CD14-positive monocyte (primary cell): ENCODE measurements at regions of chr20 and their contacts with region 1.

Region 1: DNA sequence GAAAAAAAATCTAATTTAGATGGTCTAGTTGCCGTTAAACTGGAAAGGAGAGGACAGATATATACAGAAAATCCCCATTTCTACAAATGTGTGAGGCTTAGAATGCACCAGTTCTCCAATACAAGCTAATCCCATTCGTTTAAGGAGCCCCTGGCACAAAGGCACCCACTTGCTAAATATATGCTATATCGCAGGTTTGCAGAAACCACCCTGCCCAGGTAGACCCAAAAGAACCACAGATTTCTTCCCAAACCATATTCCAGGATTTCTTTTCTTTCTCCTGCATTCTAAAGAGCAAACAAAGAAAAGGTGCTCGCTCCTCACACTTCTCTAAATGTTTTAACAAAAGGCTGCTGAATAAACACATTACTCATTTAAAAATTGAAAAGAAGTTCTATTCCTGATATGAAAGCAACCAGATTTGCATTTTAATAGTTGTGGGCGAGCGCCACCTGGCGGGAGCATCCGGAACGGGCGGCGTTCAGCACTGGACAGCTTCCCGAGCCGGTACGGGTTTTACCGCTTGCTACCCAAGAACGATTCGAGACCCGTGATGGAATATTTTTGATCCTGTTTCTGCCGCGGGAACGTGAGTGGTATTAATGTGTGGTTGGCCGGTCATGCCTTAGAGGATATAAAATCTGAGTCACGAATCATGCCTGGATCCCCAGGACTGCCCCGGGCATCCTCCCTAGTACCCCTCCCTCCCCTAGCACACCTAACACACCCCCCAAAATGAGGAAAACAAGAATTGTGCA is 2.1 kb downstream of the PTPRT start:
- DNase-seq: peak; percentile 2 to 24 (median 19)
- H3K4me3 ChIP-seq: no peak overlapping the region
- H3K4me3 Mint-ChIP-seq: peak overlapping the region in 1 of 2 donors; percentile 72
- H3K27ac ChIP-seq: no peak overlapping the region
- H3K27ac Mint-ChIP-seq: no peak overlapping the region
- H3K4me1 ChIP-seq: no peaks in the 10 kb centered on the region
- H3K4me1 Mint-ChIP-seq: no peaks in the 10 kb centered on the region
- H3K27me3 ChIP-seq: peaks cover 12 to 37% of the 10 kb centered on the region in 2 donors
- H3K27me3 Mint-ChIP-seq: peaks cover 31 to 47% (median 35%) of the 10 kb centered on the region in 3 donors
- CTCF ChIP-seq: peak; percentile 95

Region 2: DNA sequence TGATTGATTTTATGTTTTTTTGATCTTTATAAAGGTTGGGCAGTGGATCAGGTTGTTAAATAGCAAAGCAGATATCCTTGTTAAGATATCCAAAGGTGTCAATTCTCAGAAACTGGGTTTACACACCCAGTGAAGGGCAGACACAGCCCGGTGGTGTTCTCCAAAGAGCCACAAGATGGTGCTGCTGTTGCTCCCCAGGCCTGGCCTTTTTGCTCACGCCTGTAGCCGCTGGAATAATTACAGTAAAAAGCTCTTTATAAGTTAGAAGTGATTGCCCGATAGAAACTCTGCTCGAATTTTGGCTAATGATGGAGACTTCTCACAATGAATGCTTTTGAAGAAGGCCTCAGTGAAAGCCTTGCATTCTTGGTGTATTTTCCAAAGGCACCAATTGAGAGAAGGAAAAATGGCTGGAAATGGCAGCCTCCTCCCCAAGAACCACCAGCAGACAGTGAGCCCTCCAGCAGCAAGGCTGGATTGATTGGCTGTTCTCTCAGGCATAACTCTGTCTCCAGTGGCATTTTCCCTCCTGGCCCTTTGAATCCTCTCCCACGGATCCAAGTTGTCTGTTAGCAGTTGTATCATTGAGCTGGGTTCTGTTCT is 1449.0 kb before region 1 on chr20:
- intact Hi-C with region 1: loop called (anchors 5 kb)
- DNase-seq: peak in 2 of 3 donors; percentile 1 to 21
- H3K4me3 ChIP-seq: no peak overlapping the region
- H3K4me3 Mint-ChIP-seq: no peak overlapping the region
- H3K27ac ChIP-seq: no peak overlapping the region
- H3K27ac Mint-ChIP-seq: no peak overlapping the region
- H3K4me1 ChIP-seq: no peaks in the 10 kb centered on the region
- H3K4me1 Mint-ChIP-seq: no peaks in the 10 kb centered on the region
- H3K27me3 ChIP-seq: no peaks in the 10 kb centered on the region
- H3K27me3 Mint-ChIP-seq: peaks cover 2 to 5% (median 2%) of the 10 kb centered on the region in 3 donors
- CTCF ChIP-seq: peak; percentile 66

Region 3: DNA sequence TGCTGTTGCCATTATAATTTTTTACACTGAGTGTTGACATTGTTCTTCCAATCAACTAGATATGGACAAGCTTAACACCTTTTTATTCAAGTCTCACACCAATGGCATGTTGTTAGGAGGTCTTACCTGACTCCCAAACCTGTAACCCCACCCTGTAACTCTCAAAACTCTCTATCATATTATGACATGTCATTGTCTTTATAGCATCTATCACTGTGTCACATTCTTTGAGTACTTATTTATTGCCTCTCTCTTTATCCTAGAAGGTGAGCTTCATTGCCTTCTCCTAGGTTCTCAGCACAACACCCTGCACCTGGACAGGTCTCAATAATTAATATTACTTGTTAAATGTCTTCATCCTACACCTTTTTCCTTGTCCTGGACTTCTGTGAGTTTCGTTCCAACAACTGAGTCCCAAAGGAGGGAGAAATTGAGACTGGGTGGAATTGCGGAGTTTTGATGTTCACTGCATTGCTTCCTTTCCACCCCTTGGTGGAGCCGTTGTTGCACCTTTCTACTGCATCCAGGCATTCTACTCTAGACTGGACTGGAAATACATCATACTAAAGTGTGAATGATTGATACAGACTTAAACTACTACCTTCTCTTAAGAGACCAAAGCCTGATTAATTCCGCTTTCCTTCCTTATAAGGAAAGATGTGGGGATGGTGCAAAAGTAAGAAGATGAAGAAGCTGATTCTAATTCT is 1231.5 kb before region 1 on chr20:
- intact Hi-C with region 1: loop called in 1 of 2 experiments (anchors 5 kb)
- DNase-seq: no peak
- H3K4me3 ChIP-seq: no peak overlapping the region
- H3K4me3 Mint-ChIP-seq: no peak overlapping the region
- H3K27ac ChIP-seq: no peak overlapping the region
- H3K27ac Mint-ChIP-seq: no peak overlapping the region
- H3K4me1 ChIP-seq: no peaks in the 10 kb centered on the region
- H3K4me1 Mint-ChIP-seq: no peaks in the 10 kb centered on the region
- H3K27me3 ChIP-seq: no peaks in the 10 kb centered on the region
- H3K27me3 Mint-ChIP-seq: peaks cover under 1 to 4% (median 3%) of the 10 kb centered on the region in 3 donors
- CTCF ChIP-seq: no peak

Region 4: DNA sequence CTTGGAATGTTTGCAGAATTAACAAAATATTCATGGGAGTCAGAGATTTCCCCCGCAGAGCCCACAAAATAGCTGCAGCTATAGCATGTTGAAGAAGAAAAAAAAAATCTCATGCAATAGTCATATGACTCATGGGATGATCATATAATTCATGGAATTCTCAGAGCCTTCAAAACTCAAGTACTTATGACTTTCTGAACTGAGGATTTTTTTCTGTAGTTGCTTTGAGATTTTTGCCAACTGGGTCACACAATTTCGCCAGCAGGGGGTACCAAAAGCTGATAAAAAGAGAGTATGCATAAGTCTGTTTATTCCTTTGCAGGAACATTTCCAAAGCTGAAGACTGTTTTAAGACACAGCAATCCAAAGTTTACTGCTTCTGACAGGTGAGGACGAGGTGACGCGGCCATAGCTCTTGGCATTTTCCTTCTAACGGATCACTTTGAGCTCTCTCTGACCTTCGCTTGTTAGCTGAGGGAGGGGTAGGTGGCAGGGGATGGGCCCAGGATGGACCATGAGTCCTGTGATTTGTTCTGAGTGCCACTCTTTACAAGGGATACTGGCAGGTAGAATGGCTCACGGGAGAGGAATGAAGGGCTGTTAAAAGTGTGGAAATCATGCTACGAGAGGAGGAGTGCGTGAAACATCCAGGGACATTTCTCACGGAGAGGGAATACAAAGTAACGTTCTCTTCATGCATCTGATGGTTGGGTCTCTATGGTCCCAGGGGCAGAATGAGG is 983.3 kb before region 1 on chr20:
- intact Hi-C with region 1: loop called in 1 of 2 experiments (anchors 5 kb)
- DNase-seq: no peak
- H3K4me3 ChIP-seq: no peak overlapping the region
- H3K4me3 Mint-ChIP-seq: no peak overlapping the region
- H3K27ac ChIP-seq: no peak overlapping the region
- H3K27ac Mint-ChIP-seq: no peak overlapping the region
- H3K4me1 ChIP-seq: no peaks in the 10 kb centered on the region
- H3K4me1 Mint-ChIP-seq: no peaks in the 10 kb centered on the region
- H3K27me3 ChIP-seq: no peaks in the 10 kb centered on the region
- H3K27me3 Mint-ChIP-seq: peaks cover 0 to 1% (median 1%) of the 10 kb centered on the region in 3 donors
- CTCF ChIP-seq: no peak